ENCODE measurements at regions of chr17 and their contacts with region 1.

Region 1: DNA sequence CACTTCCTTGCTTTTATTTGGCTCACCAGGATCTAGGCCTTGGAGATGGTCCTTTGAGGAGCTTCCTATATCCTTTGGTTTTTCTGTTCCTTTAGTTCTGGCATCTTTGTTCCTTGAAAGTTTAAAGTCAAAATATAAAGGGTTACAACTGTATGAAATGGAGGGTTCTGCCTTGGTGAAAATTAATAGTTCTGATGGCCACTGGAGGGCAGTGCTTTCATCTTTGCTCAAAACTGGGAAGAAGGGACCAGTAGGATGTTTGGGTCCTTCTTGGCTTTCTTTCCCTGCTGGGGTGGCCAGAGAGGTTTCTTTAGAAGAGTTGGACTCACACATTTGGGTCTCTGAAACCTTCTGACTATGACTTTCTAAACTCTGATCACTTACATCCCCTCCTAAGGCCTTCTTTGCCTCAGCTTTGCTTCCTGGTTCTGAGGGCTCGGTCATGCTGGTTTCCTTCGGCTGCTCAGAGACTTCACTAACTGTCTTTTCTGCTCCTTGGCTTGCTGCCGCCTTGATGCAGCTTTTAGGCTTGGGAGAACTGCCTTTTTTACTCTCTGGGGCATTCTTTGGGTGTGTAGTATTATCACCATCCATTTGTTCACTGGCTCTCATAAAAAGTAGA is 10.9 kb upstream of the ITGA2B start:
- DNase-seq: no peak
- H3K4me3 ChIP-seq: no peak overlapping the region
- CTCF ChIP-seq: peak; percentile 41

Region 2: GRCh38 chr17:44385287-44386181 is 14.8 kb before region 1 on chr17:
- CTCF ChIA-PET with region 1: interaction called, 21 read pairs
- POLR2A ChIA-PET with region 1: interaction called, 5 read pairs
- DNase-seq: no peak
- H3K4me3 ChIP-seq: peak overlapping the region; percentile 62
- CTCF ChIP-seq: no peak

Region 3: GRCh38 chr17:44438636-44439035 is 38.3 kb after region 1 on chr17:
- CTCF ChIA-PET with region 1: no interaction called
- POLR2A ChIA-PET with region 1: no interaction called
- DNase-seq: no peak
- H3K4me3 ChIP-seq: no peak overlapping the region
- CTCF ChIP-seq: no peak

Region 4: GRCh38 chr17:44467108-44467507 is 66.8 kb after region 1 on chr17:
- CTCF ChIA-PET with region 1: no interaction called
- POLR2A ChIA-PET with region 1: no interaction called
- DNase-seq: no peak
- H3K4me3 ChIP-seq: no peak overlapping the region
- CTCF ChIP-seq: no peak

Region 5: GRCh38 chr17:44496815-44497214 is 96.5 kb after region 1 on chr17:
- CTCF ChIA-PET with region 1: interaction called, 11 read pairs
- POLR2A ChIA-PET with region 1: no interaction called
- DNase-seq: no peak
- H3K4me3 ChIP-seq: no peak overlapping the region
- CTCF ChIP-seq: no peak

Region 6: GRCh38 chr17:44636562-44636961 is 236.2 kb after region 1 on chr17:
- CTCF ChIA-PET with region 1: interaction called, 17 read pairs
- POLR2A ChIA-PET with region 1: no interaction called
- DNase-seq: peak; percentile 23
- H3K4me3 ChIP-seq: no peak overlapping the region
- CTCF ChIP-seq: peak; percentile 49